ENCODE measurements at regions of chr9 and their contacts with region 1.

Region 1: GRCh38 chr9:112112941-112113681 is 62.0 kb downstream of the SUSD1 start:
- DNase-seq: peak in 15 of 35 experiments; percentile 1 to 50 (median 7)
- ATAC-seq: peak in 3 of 4 experiments; percentile 37 to 59 (median 47)
- H3K4me3 ChIP-seq: no peak overlapping the region
- H3K4me3 Mint-ChIP-seq: no peak overlapping the region
- H3K27ac ChIP-seq: no peak overlapping the region
- H3K27ac Mint-ChIP-seq: no peak overlapping the region
- H3K4me1 ChIP-seq: no peaks in the 10 kb centered on the region
- H3K4me1 Mint-ChIP-seq: peaks cover 0 to 3% (median 0%) of the 10 kb centered on the region in 3 donors
- H3K27me3 ChIP-seq: no peaks in the 10 kb centered on the region
- H3K27me3 Mint-ChIP-seq: no peaks in the 10 kb centered on the region

Region 2: GRCh38 chr9:112809351-112809848 is 696.3 kb after region 1 on chr9:
- CTCF ChIA-PET with region 1: no interaction called
- POLR2A ChIA-PET with region 1: interaction called in 1 of 2 experiments, 12 read pairs
- DNase-seq: no peak
- ATAC-seq: peak in 1 of 4 experiments; percentile 29
- H3K4me3 ChIP-seq: no peak overlapping the region
- H3K4me3 Mint-ChIP-seq: no peak overlapping the region
- H3K27ac ChIP-seq: no peak overlapping the region
- H3K27ac Mint-ChIP-seq: no peak overlapping the region
- H3K4me1 ChIP-seq: peaks cover 0 to 2% of the 10 kb centered on the region in 2 experiments
- H3K4me1 Mint-ChIP-seq: peaks cover 2 to 5% (median 3%) of the 10 kb centered on the region in 3 donors
- H3K27me3 ChIP-seq: no peaks in the 10 kb centered on the region
- H3K27me3 Mint-ChIP-seq: no peaks in the 10 kb centered on the region

Measured in T-cell (primary cell).